AG04450 (cell line): ENCODE measurements at regions of chr13 and their contacts with region 1.

Region 1: GRCh38 chr13:57624565-57625435 is 6.7 kb upstream of the PCDH17 start:
- DNase-seq: no peak
- H3K4me3 ChIP-seq: no peak overlapping the region
- H3K27ac ChIP-seq: no peak overlapping the region
- H3K27me3 ChIP-seq: peaks cover 7% of the 10 kb centered on the region
- CTCF ChIP-seq: peak; percentile 74

Region 2: DNA sequence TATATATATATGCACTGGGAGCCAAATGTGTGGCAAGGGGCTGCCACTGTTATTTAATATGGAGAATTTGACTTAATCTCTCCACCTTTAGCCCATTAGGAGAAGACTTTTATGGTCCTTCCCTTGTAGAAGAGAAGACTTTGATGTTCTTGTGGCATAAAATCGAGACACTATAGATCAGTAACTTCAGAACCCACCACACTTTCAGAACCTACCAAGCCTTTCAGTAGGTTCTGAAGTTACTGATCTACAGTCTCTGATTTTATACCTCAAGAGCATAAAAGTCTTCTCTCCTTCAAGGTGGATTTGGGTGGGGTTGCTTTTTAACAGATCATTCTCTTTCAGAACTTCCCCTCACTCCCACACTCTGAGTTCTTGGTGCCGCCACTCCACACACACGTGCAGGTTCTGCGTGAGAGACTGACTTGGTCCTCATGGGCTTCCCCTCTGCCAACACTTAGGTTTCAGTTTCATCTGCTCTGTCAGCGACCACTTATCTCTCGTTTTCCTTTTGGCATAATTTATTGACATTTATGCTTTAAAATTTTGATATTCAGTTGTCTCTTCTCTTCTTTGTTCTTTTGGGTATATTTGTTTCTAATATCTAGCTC is 206.6 kb before region 1 on chr13:
- CTCF ChIA-PET with region 1: no interaction called
- POLR2A ChIA-PET with region 1: no interaction called
- DNase-seq: no peak
- H3K4me3 ChIP-seq: no peak overlapping the region
- H3K27ac ChIP-seq: no peak overlapping the region
- H3K27me3 ChIP-seq: no peaks in the 10 kb centered on the region
- CTCF ChIP-seq: no peak

Region 3: DNA sequence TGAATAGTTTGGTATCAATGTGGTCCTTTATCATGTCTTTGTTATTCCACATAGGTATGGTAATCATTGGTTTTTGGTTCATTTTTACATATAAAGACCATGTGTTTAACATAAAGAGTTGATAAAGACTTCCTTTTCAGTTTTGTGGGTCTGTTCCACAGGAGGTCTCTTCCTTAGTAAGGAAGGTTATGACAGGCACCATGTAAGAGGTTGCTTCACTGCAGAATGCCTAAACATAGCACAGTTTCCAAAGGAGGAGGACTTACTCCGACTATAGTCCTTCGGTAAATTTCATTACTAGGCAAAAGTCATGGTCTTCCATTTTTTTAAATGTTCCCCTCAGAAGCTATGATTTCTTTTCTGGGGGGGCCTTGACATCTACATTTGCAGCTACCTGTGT is 20.4 kb before region 1 on chr13:
- CTCF ChIA-PET with region 1: interaction called, 22 read pairs
- POLR2A ChIA-PET with region 1: no interaction called
- DNase-seq: no peak
- H3K4me3 ChIP-seq: no peak overlapping the region
- H3K27ac ChIP-seq: no peak overlapping the region
- H3K27me3 ChIP-seq: no peaks in the 10 kb centered on the region
- CTCF ChIP-seq: no peak

Region 4: DNA sequence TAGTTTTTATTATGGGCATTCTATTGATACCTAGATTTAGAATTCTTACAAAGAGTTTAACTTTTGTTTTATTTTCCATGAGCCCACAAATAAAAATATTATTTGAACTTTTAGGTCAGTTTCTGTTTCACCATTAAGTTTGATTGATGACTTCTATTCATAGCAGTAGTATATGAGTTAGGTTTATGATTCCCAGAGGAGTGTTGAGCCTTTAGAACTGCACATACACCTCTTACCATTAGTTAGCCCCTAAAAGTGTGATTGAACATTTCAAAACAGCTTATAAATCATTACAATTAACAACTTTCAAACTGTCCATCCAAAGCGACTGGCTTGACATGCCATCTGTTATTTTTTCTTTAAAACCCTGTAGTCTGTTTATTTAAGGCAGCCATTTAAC is 12.2 kb before region 1 on chr13:
- CTCF ChIA-PET with region 1: interaction called, 22 read pairs
- POLR2A ChIA-PET with region 1: no interaction called
- DNase-seq: no peak
- H3K4me3 ChIP-seq: no peak overlapping the region
- H3K27ac ChIP-seq: no peak overlapping the region
- H3K27me3 ChIP-seq: no peaks in the 10 kb centered on the region
- CTCF ChIP-seq: no peak

Region 5: GRCh38 chr13:57787058-57787791 is 162.4 kb after region 1 on chr13:
- CTCF ChIA-PET with region 1: no interaction called
- POLR2A ChIA-PET with region 1: no interaction called
- DNase-seq: no peak
- H3K4me3 ChIP-seq: no peak overlapping the region
- H3K27ac ChIP-seq: no peak overlapping the region
- H3K27me3 ChIP-seq: no peaks in the 10 kb centered on the region
- CTCF ChIP-seq: no peak

Region 6: GRCh38 chr13:59318320-59318930 is 1693.6 kb after region 1 on chr13:
- CTCF ChIA-PET with region 1: interaction called, 27 read pairs
- POLR2A ChIA-PET with region 1: no interaction called
- DNase-seq: peak; percentile 16
- H3K4me3 ChIP-seq: no peak overlapping the region
- H3K27ac ChIP-seq: no peak overlapping the region
- H3K27me3 ChIP-seq: no peaks in the 10 kb centered on the region
- CTCF ChIP-seq: peak; percentile 82